PC-9 (cell line): ENCODE measurements at regions of chr15 and their contacts with region 1.

Region 1: DNA sequence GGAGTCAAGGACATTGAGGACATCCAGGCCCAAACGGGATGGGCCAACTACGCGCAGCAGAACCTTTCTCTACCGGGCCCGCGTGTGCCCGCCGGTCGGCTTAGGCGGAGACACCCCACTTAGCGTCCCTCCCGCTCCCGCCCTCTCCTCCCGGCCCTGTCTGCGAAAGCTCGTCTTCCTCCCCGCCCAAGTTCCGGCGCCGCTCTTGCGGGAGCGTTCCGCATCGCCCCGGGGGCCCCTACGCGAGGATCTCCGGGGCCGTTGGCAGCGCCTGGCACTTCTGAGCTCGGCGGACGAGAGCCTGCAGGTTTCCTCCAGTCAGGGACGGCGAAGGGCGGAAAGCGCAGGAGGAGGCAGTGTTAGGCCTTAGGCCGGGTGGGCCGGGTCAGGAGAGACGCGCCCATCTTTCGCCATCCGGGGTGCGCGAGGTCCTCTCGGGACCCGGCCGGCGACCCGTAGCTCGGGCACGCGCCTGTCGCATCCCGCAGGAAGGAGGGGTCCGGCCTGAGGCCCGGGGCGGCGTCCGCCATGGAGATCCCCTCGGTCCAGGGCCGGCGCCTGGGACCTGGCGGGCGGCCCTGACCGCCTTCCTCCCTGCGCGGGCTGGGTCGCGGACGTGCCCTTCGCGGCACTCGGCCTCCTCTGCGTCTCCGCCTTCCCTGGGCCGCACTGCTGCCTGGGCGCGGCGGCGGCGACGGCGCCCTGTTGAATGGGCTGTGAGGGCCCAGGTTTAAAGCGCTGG is at the start of gene FEM1B:
- DNase-seq: peak; percentile 68 to 87
- H3K4me3 ChIP-seq: peak within 1 kb of the TSS; percentile 97
- H3K27ac ChIP-seq: peak within 1 kb of the TSS; percentile 97
- H3K4me1 ChIP-seq: peaks cover 79% of the 10 kb centered on the region
- H3K27me3 ChIP-seq: no peaks in the 10 kb centered on the region
- CTCF ChIP-seq: no peak
- total RNA-seq, gene FEM1B: 26.3 and 31.6 TPM in 2 replicates

Region 2: GRCh38 chr15:67660874-67661606 is 616.7 kb before region 1 on chr15:
- CTCF ChIA-PET with region 1: no interaction called
- POLR2A ChIA-PET with region 1: interaction called, 13 read pairs
- intact Hi-C with region 1: no loop called
- DNase-seq: no peak
- H3K4me3 ChIP-seq: no peak overlapping the region
- H3K27ac ChIP-seq: no peak overlapping the region
- H3K4me1 ChIP-seq: no peaks in the 10 kb centered on the region
- H3K27me3 ChIP-seq: no peaks in the 10 kb centered on the region
- CTCF ChIP-seq: no peak

Region 3: DNA sequence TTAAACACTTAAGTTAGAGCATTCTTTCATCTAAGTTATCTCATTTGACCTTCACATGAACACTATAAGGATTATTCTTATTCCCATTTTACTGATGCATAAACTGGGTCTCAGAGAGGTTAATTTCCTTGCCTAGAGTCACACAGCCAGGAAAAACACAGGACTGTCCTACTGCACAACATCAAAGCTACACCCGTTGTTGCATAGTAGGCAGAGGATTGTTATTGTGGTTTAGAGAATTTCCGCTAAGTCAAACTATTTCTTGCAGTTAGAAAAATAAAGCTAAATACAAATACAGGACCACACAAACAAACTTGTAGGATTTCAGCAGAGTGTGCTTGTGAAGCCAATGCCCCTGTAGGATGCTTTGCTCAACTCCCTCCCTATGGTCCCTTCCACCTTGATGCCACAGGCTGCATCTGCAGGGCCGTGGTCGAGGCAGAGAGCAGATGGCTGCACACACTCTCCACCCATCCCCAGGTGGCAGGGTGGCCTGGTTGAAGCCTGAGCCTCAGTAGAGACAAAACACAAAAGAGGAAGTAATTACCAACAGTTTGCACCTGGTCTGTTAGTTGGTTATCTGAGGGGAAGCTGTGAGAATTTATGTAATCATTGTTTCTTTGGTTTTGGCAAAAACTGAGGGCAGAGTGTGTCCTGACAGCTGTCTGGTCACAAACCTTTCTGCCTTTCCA is 493.5 kb before region 1 on chr15:
- CTCF ChIA-PET with region 1: no interaction called
- POLR2A ChIA-PET with region 1: no interaction called
- intact Hi-C with region 1: no loop called
- DNase-seq: no peak
- H3K4me3 ChIP-seq: no peak overlapping the region
- H3K27ac ChIP-seq: no peak overlapping the region
- H3K4me1 ChIP-seq: no peaks in the 10 kb centered on the region
- H3K27me3 ChIP-seq: no peaks in the 10 kb centered on the region
- CTCF ChIP-seq: no peak

Region 4: GRCh38 chr15:68229386-68230156 is 48.2 kb before region 1 on chr15 and contains the start of gene CLN6:
- CTCF ChIA-PET with region 1: no interaction called
- POLR2A ChIA-PET with region 1: no interaction called
- intact Hi-C with region 1: loop called (anchors 2 kb)
- DNase-seq: peak; percentile 41 to 79
- H3K4me3 ChIP-seq: peak within 1 kb of the TSS; percentile 90
- H3K27ac ChIP-seq: no peak within 1 kb of the TSS
- H3K4me1 ChIP-seq: peaks cover 15% of the 10 kb centered on the region; the same call in 1 of the 2 replicates
- H3K27me3 ChIP-seq: no peaks in the 10 kb centered on the region
- CTCF ChIP-seq: no peak
- total RNA-seq, gene CLN6: 38.5 and 48.7 TPM in 2 replicates

Region 5: DNA sequence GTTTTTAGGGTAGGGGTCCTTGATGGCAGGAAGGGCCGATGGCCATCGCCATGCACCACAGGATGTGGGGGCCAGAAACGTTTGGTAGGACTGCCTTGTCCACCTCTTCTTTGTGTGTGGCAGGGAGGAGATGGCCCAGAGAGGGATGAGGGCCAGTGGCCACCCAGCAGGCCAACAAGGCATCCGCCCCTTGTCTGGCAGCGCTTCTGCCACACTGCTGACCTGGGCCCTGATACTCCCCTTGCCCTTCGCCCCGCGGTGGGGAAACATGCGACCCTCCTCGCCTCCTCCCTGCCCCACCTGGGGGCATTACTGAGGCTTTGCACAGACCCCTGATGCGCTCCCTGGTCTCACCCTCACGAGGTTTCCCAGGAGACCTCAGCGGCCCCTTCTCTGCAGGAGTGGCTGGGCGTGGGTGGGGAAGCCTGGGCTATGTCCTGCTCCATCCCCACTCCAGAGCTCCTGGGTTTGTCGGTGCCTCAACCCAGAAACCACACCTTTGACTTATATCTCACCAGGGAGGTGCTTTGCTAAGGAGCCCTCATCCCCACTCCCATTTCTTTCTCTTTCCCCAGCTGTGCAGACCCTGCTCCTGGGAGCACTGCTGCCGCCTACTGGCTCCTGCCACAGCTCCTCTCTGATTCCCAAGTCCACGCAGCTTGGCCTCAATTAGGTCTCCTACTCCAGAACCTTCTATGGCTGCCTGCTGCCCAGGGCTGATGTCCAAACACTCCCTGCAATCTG is 38.5 kb after region 1 on chr15:
- CTCF ChIA-PET with region 1: no interaction called
- POLR2A ChIA-PET with region 1: no interaction called
- intact Hi-C with region 1: no loop called
- DNase-seq: no peak
- H3K4me3 ChIP-seq: no peak overlapping the region
- H3K27ac ChIP-seq: no peak overlapping the region
- H3K4me1 ChIP-seq: no peaks in the 10 kb centered on the region
- H3K27me3 ChIP-seq: no peaks in the 10 kb centered on the region
- CTCF ChIP-seq: no peak; the same call in 1 of the 2 replicates

Region 6: DNA sequence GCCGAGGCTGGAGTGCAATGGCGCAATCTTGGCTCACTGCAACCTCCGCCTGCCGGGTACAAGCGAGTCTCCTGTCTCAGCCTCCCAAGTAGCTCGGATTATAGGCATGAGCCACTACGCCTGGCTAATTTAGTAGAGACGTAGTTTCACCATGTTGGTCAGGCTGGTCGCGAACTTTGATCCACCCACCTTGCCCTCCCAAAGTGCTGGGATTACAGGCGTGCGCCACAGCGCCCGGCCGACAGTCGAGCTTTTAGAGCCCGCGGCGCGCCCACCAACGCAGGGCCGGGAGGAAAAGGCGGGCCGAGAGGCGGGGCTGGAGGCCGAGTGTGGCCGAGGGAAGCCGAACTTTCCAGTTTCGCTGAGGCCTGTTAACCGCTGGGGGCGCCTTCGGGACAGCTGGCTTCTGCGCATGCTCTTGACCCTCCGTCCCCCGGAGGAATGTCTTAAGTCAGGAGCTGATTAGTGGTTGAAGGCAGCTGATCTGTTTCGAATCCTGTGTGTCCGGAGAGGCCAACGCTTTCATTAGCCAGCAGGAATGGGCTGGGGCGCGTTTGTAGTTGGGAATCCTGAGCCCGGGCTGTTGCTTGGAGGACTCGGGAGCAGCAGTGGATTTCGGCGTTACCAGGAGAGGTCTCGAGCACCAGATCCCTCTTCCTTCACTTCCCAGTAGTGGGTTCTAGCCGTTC is 1184.9 kb after region 1 on chr15:
- CTCF ChIA-PET with region 1: no interaction called
- POLR2A ChIA-PET with region 1: interaction called, 10 read pairs
- intact Hi-C with region 1: no loop called
- DNase-seq: peak; percentile 89 to 97
- H3K4me3 ChIP-seq: peak overlapping the region; percentile 61
- H3K27ac ChIP-seq: peak overlapping the region; percentile 83
- H3K4me1 ChIP-seq: peaks cover 33% of the 10 kb centered on the region
- H3K27me3 ChIP-seq: no peaks in the 10 kb centered on the region
- CTCF ChIP-seq: peak; percentile 78